Natural killer cell (primary cell): ENCODE measurements at regions of chr11 and their contacts with region 1.

Region 1: GRCh38 chr11:65418711-65419459 is 3.7 kb upstream of the NEAT1 start:
- DNase-seq: peak; percentile 84 to 89
- ATAC-seq: peak; percentile 49 to 77 (median 61)
- H3K4me3 ChIP-seq: peak overlapping the region; percentile 39
- H3K4me3 Mint-ChIP-seq: peak overlapping the region; percentile 88
- H3K27ac ChIP-seq: peak overlapping the region; percentile 100
- H3K27ac Mint-ChIP-seq: peak overlapping the region; percentile 98 to 100
- H3K4me1 ChIP-seq: peaks cover 69% of the 10 kb centered on the region
- H3K4me1 Mint-ChIP-seq: peaks cover 69 to 79% of the 10 kb centered on the region in 2 donors
- H3K27me3 ChIP-seq: no peaks in the 10 kb centered on the region
- H3K27me3 Mint-ChIP-seq: peaks cover 0 to 5% of the 10 kb centered on the region in 2 donors
- CTCF ChIP-seq: no peak

Region 2: DNA sequence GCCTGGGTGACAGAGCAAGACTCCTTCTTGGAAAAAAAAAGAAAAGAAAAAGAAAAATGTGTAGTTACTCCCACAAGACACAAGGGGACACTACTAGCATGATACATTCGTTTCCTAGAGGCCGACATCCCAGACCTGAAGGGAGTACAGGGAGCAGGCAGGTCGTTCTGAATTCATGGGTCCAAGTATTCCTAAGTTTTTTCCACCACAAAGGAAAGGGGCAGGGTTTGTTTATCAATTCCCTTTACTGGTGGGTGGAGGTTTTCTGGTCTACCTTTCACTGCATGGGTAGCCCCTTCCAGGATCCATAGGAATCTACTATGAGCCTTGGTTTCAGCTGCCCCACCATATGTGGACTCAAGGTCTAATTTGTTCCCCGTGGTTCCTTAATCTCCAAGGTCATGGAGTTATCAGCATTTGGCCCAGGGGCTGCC is 52.5 kb before region 1 on chr11:
- intact Hi-C with region 1: loop called (anchors 5 kb)
- DNase-seq: peak in 1 of 2 donors; percentile 80
- ATAC-seq: peak; percentile 76 to 81 (median 81)
- H3K4me3 ChIP-seq: no peak overlapping the region
- H3K4me3 Mint-ChIP-seq: no peak overlapping the region
- H3K27ac ChIP-seq: no peak overlapping the region
- H3K27ac Mint-ChIP-seq: no peak overlapping the region
- H3K4me1 ChIP-seq: peaks cover 15% of the 10 kb centered on the region
- H3K4me1 Mint-ChIP-seq: peaks cover 5 to 13% of the 10 kb centered on the region in 2 donors
- H3K27me3 ChIP-seq: no peaks in the 10 kb centered on the region
- H3K27me3 Mint-ChIP-seq: no peaks in the 10 kb centered on the region
- CTCF ChIP-seq: peak; percentile 70

Region 3: DNA sequence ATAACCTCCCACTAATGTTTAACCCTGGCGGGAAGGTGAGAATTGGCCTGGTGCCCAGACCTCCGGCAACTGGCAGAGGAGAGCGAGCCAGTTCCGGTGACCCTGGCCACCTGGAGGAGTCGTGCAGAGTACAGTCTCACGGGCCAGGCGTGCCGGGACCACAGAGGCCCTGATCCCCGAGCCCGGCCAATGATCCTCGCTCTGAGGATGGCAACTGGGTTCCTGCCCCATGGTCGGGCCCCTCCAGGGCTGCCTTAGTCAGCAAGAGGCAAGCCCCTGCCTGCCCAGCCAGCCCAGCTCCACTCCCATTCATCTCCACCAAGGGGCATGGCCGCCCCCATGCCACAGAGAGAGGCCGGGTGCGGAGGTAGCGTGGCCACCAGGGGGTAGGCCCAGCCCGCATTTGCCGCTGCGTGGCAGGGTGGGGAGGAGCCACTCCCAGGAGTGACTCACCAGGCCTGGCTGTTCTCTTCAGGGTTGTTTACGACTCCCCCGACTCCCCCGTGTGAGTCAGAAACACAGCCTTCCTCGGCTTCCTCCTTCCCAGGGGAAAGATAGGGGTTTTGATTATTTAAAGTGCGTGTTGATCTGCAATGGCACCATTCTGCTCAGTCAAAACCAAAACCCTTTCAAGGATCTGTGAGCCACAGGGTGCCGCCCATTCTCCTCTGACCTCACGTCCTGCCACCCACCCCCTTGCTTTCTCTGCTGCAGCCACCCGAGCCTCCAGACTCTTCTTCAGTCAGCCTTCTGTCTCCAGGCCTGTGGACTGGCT is 36.7 kb before region 1 on chr11 and contains the start of gene SLC25A45:
- intact Hi-C with region 1: loop called (anchors 1 kb)
- DNase-seq: peak; percentile 90 to 94
- ATAC-seq: peak; percentile 75 to 89 (median 79)
- H3K4me3 ChIP-seq: peak within 1 kb of the TSS; percentile 51
- H3K4me3 Mint-ChIP-seq: peak within 1 kb of the TSS; percentile 89
- H3K27ac ChIP-seq: peak within 1 kb of the TSS; percentile 92
- H3K27ac Mint-ChIP-seq: peak within 1 kb of the TSS; percentile 99
- H3K4me1 ChIP-seq: peaks cover 81% of the 10 kb centered on the region
- H3K4me1 Mint-ChIP-seq: peaks cover 39 to 56% of the 10 kb centered on the region in 2 donors
- H3K27me3 ChIP-seq: no peaks in the 10 kb centered on the region
- H3K27me3 Mint-ChIP-seq: no peaks in the 10 kb centered on the region
- CTCF ChIP-seq: peak; percentile 83
- total RNA-seq, gene SLC25A45: 50.9 to 61.1 (median 61.0) TPM

Region 4: GRCh38 chr11:65432686-65433582 is 14.0 kb after region 1 on chr11:
- intact Hi-C with region 1: loop called (anchors 1 kb)
- DNase-seq: peak in 1 of 2 donors; percentile 78
- ATAC-seq: peak in 2 of 3 donors; percentile 14 to 15
- H3K4me3 ChIP-seq: no peak overlapping the region
- H3K4me3 Mint-ChIP-seq: peak overlapping the region; percentile 95
- H3K27ac ChIP-seq: peak overlapping the region; percentile 49
- H3K27ac Mint-ChIP-seq: peak overlapping the region; percentile 98 to 100
- H3K4me1 ChIP-seq: peaks cover 39% of the 10 kb centered on the region
- H3K4me1 Mint-ChIP-seq: peaks cover 84 to 86% of the 10 kb centered on the region in 2 donors
- H3K27me3 ChIP-seq: no peaks in the 10 kb centered on the region
- H3K27me3 Mint-ChIP-seq: no peaks in the 10 kb centered on the region
- CTCF ChIP-seq: peak; percentile 51

Region 5: GRCh38 chr11:65477149-65477965 is 58.5 kb after region 1 on chr11:
- intact Hi-C with region 1: loop called (anchors 1 kb)
- DNase-seq: peak; percentile 92
- ATAC-seq: peak; percentile 84 to 94 (median 92)
- H3K4me3 ChIP-seq: peak overlapping the region; percentile 78
- H3K4me3 Mint-ChIP-seq: peak overlapping the region; percentile 98
- H3K27ac ChIP-seq: peak overlapping the region; percentile 95
- H3K27ac Mint-ChIP-seq: peak overlapping the region; percentile 94 to 99
- H3K4me1 ChIP-seq: peaks cover 25% of the 10 kb centered on the region
- H3K4me1 Mint-ChIP-seq: peaks cover 15 to 17% of the 10 kb centered on the region in 2 donors
- H3K27me3 ChIP-seq: no peaks in the 10 kb centered on the region
- H3K27me3 Mint-ChIP-seq: no peaks in the 10 kb centered on the region
- CTCF ChIP-seq: no peak

Region 6: DNA sequence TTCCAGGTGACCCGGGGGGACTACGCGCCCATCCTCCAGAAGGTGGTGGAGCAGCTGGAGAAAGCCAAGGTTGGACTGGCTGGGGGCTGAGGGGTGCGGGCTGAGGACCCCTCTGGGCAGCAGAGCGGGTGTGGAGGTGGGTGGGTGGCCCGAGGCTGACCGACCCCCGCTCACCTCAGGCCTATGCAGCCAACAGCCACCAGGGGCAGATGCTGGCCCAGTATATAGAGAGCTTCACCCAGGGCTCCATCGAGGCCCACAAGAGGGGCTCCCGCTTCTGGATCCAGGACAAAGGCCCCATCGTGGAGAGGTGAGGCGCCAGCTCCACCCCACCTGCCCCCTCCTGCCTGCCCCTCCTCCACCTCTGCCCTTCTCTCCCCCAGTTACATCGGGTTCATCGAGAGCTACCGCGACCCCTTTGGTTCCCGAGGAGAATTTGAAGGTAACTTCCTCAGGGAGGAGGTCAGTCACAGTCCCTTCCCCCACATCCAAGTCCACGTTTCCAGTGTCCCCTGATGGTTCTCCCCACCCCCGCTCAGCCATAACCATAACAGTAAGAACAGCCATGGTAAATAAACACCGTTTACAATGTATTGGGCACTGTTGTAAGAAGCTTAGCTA is 1072.5 kb after region 1 on chr11:
- intact Hi-C with region 1: no loop called
- DNase-seq: no peak
- ATAC-seq: no peak
- H3K4me3 ChIP-seq: no peak overlapping the region
- H3K4me3 Mint-ChIP-seq: no peak overlapping the region
- H3K27ac ChIP-seq: no peak overlapping the region
- H3K27ac Mint-ChIP-seq: no peak overlapping the region
- H3K4me1 ChIP-seq: no peaks in the 10 kb centered on the region
- H3K4me1 Mint-ChIP-seq: no peaks in the 10 kb centered on the region
- H3K27me3 ChIP-seq: no peaks in the 10 kb centered on the region
- H3K27me3 Mint-ChIP-seq: no peaks in the 10 kb centered on the region
- CTCF ChIP-seq: no peak